SK-N-SH (cell line): ENCODE measurements at regions of chr6 and their contacts with region 1.

Region 1: DNA sequence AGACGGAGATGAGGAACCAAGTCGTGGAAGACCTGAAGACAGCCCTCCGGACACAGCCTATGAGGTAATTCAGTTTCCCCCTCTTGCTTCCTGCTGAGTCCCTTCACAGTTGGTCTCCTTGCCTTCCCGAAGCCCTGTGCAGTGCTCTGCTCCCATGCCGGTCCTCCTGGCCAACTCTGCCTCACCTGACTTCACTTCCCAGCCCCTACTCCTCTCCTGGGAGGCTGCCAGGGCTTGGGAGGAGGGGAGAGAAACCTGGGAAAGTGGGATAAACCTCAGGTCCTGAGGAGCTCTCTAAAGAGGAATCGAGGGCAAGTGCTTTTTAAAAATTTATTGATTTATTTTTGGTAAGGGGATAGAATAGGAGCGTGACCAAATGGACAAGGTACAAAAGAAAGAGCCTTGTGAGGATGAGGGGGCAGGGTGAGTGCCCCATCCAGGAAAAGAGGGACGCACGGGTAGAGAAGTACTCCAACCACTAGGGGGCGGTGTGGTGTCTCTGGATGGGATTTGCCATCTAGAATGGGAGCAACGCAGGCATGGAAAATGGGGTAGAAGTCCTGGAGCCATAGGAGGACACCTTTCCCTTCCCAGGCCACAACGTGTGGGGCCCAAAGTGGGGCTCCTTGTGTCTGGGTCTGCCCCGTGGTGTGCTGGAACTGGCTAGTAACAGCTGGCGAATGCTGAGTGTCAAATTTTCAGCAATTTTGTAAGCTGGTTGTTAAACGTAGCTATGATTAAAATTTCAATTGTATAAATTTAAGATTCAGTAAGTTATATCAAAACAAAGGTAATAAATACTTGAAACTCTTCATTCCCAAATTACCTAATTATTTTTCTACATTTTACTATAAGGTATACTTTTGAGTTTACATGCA is 69.0 kb downstream of the MOCS1 start:
- DNase-seq: peak; percentile 65
- H3K4me3 ChIP-seq: peak overlapping the region in 1 of 2 experiments; percentile 29; a peak in 1 of 4 replicates
- H3K27ac ChIP-seq: no peak overlapping the region
- H3K4me1 ChIP-seq: no peaks in the 10 kb centered on the region
- H3K27me3 ChIP-seq: no peaks in the 10 kb centered on the region
- CTCF ChIP-seq: peak; percentile 84
- EP300 ChIP-seq: no peak
- RAD21 ChIP-seq: peak; percentile 58

Region 2: DNA sequence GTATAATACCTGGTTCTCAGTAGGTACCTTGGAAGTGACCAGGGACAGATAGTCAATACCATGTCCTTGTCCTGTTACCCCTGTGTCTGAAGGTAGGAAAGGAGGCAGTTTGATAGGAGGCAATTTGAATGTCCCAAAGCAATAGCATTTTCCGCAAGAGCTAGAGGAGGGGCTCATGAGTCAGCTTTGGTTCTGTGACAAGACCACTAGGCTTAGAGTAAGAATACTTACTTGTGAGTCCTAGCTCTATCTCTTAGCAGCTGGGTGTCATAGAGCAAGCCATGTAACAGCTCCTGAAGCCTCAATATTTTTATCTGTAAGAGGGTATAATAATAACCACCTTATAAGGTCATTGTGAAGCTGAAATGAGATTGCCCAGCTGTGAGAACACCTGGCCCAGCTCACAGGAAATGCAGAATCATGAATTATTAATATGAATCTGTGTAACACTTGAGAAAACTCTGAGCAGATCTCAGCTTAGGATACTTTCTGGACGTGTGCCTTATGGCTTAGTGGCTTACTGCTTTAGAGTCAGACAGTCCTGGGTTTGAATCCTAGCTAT is 14.4 kb before region 1 on chr6:
- CTCF ChIA-PET with region 1: interaction called, 14 read pairs
- POLR2A ChIA-PET with region 1: no interaction called
- DNase-seq: no peak
- H3K4me3 ChIP-seq: no peak overlapping the region
- H3K27ac ChIP-seq: no peak overlapping the region
- H3K4me1 ChIP-seq: no peaks in the 10 kb centered on the region; a peak in 1 of 4 replicates
- H3K27me3 ChIP-seq: no peaks in the 10 kb centered on the region
- CTCF ChIP-seq: no peak
- EP300 ChIP-seq: no peak
- RAD21 ChIP-seq: no peak

Region 3: DNA sequence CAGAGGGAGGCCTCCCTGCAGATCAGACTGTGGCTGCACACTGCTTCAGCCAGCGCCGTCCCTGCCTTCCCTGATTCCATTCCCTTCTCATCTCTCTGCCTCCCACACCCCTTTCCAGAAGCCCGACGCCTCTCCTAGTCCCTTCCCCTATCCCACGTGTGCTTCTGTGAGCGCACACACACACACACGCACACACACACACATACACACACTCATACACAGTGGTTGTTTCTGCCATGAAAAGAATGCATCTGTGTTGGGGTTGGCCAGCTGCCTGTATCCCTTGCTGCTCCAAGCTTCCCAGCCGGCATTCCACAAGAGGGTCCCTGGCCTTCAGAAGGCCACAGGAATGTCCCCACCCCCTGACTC is 17.3 kb after region 1 on chr6:
- CTCF ChIA-PET with region 1: interaction called, 22 read pairs
- POLR2A ChIA-PET with region 1: no interaction called
- DNase-seq: no peak
- H3K4me3 ChIP-seq: no peak overlapping the region
- H3K27ac ChIP-seq: peak overlapping the region in 1 of 2 experiments; percentile 77; a peak in 3 of 4 replicates
- H3K4me1 ChIP-seq: peaks cover 0 to 23% of the 10 kb centered on the region in 2 experiments; a peak in 2 of 4 replicates
- H3K27me3 ChIP-seq: no peaks in the 10 kb centered on the region
- CTCF ChIP-seq: no peak
- EP300 ChIP-seq: peak in 1 of 2 experiments; percentile 37; a peak in 1 of 4 replicates
- RAD21 ChIP-seq: no peak

Region 4: GRCh38 chr6:40232698-40233097 is 367.4 kb after region 1 on chr6:
- CTCF ChIA-PET with region 1: no interaction called
- POLR2A ChIA-PET with region 1: no interaction called
- DNase-seq: no peak
- H3K4me3 ChIP-seq: no peak overlapping the region
- H3K27ac ChIP-seq: no peak overlapping the region
- H3K4me1 ChIP-seq: no peaks in the 10 kb centered on the region
- H3K27me3 ChIP-seq: no peaks in the 10 kb centered on the region
- CTCF ChIP-seq: no peak
- EP300 ChIP-seq: no peak
- RAD21 ChIP-seq: no peak